Endothelial cell of umbilical vein (primary cell): ENCODE measurements at regions of chr2 and their contacts with region 1.

Region 1: DNA sequence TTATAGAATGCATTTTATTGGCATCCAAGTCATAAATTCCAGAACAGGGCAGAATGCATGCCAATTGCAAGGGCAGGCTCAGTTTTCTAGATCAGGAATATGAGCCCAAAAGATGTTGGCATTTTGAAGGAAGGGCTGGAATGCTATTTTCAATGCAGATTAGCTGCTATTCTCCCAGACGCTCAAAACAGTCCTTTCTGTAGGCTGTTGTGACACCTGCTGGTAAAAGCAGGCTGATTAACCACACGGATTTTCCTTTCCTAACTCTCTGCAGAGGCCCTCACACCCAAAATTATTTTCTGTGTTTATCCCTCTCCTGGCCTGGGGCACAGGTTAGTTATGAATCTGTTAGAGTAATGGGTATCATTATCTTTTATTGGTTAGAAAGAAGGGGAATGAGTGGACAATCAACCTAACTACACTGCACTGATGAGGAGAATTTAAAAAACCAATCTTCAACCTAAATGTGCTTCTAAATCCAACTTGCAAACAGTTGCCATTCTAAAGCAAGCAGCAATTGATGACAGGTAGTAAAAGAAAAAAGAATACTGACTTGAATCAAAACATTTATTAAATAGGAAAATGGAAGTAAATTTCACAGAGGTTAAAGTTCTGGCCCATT is 94.0 kb downstream of the PLA2R1 start:
- DNase-seq: peak; percentile 76
- H3K4me3 ChIP-seq: no peak overlapping the region
- H3K27ac ChIP-seq: no peak overlapping the region
- H3K4me1 ChIP-seq: peaks cover 2% of the 10 kb centered on the region
- H3K27me3 ChIP-seq: no peaks in the 10 kb centered on the region
- CTCF ChIP-seq: peak; percentile 55 to 57
- POLR2A ChIP-seq: no peak

Region 2: DNA sequence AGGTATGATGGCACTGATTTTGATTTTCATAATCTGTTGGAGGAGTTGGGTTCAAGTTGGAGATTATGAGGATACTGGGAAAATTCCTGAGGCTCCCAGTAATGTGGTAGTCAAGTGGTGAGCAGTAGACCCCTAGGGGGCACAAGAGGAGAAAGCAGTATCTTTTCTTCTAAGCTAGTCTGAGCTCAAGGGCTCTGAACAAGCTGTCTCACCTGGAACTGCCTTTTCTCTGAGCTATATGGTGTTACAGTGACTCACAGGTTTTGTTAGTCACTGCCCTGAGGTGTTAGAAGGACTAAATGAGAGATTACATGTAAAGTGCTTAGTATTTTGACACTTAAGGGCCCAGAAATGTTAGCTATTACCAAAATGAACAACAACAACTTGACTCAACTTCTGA is 212.6 kb before region 1 on chr2:
- CTCF ChIA-PET with region 1: interaction called, 17 read pairs
- POLR2A ChIA-PET with region 1: no interaction called
- dilution Hi-C with region 1: no loop called
- intact Hi-C with region 1: loop called (anchors 2 kb)
- DNase-seq: peak; percentile 49
- H3K4me3 ChIP-seq: no peak overlapping the region
- H3K27ac ChIP-seq: no peak overlapping the region
- H3K4me1 ChIP-seq: peaks cover 14% of the 10 kb centered on the region
- H3K27me3 ChIP-seq: no peaks in the 10 kb centered on the region
- CTCF ChIP-seq: peak; percentile 36 to 47
- POLR2A ChIP-seq: no peak

Region 3: DNA sequence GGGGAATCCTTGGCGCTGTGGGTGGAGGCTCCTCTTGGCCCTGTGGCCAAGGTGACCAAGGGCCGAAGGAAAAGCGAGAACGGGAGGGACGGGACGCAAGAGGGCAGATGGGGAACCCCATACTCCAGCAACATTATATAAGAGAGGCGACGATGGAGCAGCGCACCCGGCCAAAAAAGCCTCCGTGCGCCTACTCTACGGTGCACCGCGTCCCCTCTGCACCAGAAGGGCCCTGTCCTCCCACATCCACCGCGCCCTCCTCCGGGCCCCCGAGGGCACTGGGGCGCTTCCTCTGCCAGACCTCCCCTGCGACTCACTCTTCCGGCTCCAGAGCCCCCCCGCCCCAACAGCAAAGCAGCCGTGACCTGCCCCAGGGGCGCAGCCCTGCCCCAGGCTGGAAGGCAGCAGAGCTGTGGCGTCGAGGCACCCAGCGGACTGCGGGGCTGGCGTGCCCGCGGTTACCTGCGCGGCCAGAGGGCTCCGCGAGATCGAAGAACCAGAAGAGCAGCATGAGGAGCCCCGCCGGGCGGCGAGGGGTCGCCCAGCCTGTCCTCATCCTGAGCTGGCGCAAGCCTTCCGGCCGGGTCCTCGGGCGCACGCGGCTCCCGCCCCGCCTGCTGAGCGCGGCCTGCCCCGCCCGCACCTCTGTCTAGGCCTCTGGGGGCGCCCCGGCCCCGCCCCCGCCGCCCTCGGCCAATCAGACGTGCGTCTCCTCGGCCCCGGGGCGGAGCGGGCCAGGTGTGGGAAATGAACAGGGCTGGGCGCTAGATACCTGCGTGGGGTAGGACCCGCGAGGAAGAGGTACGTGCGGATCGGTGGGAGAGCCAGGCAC is 64.0 kb before region 1 on chr2:
- CTCF ChIA-PET with region 1: interaction called, 3 read pairs
- POLR2A ChIA-PET with region 1: no interaction called
- dilution Hi-C with region 1: no loop called
- intact Hi-C with region 1: loop called (anchors 5 kb)
- DNase-seq: peak; percentile 22
- H3K4me3 ChIP-seq: peak within 1 kb of the TSS; percentile 53 to 71 (median 58)
- H3K27ac ChIP-seq: peak within 1 kb of the TSS; percentile 68
- H3K4me1 ChIP-seq: peaks cover 22% of the 10 kb centered on the region
- H3K27me3 ChIP-seq: no peaks in the 10 kb centered on the region
- CTCF ChIP-seq: no peak
- POLR2A ChIP-seq: no peak

Region 4: GRCh38 chr2:159939946-159940345 is 28.4 kb before region 1 on chr2:
- CTCF ChIA-PET with region 1: interaction called, 14 read pairs
- POLR2A ChIA-PET with region 1: no interaction called
- dilution Hi-C with region 1: no loop called
- intact Hi-C with region 1: no loop called
- DNase-seq: peak; percentile 59
- H3K4me3 ChIP-seq: no peak overlapping the region
- H3K27ac ChIP-seq: no peak overlapping the region
- H3K4me1 ChIP-seq: peaks cover 17% of the 10 kb centered on the region
- H3K27me3 ChIP-seq: no peaks in the 10 kb centered on the region
- CTCF ChIP-seq: peak; percentile 12 to 20
- POLR2A ChIP-seq: no peak

Region 5: GRCh38 chr2:160109936-160110673 is 141.7 kb after region 1 on chr2:
- CTCF ChIA-PET with region 1: no interaction called
- POLR2A ChIA-PET with region 1: no interaction called
- dilution Hi-C with region 1: no loop called
- intact Hi-C with region 1: no loop called
- DNase-seq: peak; percentile 83
- H3K4me3 ChIP-seq: no peak overlapping the region
- H3K27ac ChIP-seq: no peak overlapping the region
- H3K4me1 ChIP-seq: no peaks in the 10 kb centered on the region
- H3K27me3 ChIP-seq: no peaks in the 10 kb centered on the region
- CTCF ChIP-seq: peak; percentile 66 to 72
- POLR2A ChIP-seq: no peak